Caco-2 (cell line): ENCODE measurements at regions of chr4 and their contacts with region 1.

Region 1: GRCh38 chr4:25180524-25181131 is 20.4 kb upstream of the SEPSECS start:
- DNase-seq: peak; percentile 37 to 39
- H3K4me3 ChIP-seq: no peak overlapping the region
- H3K4me3 Mint-ChIP-seq: no peak overlapping the region
- H3K27ac Mint-ChIP-seq: no peak overlapping the region
- H3K4me1 ChIP-seq: peaks cover 11% of the 10 kb centered on the region; the same call in 1 of the 2 replicates
- H3K4me1 Mint-ChIP-seq: no peaks in the 10 kb centered on the region
- H3K27me3 ChIP-seq: no peaks in the 10 kb centered on the region
- H3K27me3 Mint-ChIP-seq: no peaks in the 10 kb centered on the region
- CTCF ChIP-seq: peak; percentile 56 to 61

Region 2: DNA sequence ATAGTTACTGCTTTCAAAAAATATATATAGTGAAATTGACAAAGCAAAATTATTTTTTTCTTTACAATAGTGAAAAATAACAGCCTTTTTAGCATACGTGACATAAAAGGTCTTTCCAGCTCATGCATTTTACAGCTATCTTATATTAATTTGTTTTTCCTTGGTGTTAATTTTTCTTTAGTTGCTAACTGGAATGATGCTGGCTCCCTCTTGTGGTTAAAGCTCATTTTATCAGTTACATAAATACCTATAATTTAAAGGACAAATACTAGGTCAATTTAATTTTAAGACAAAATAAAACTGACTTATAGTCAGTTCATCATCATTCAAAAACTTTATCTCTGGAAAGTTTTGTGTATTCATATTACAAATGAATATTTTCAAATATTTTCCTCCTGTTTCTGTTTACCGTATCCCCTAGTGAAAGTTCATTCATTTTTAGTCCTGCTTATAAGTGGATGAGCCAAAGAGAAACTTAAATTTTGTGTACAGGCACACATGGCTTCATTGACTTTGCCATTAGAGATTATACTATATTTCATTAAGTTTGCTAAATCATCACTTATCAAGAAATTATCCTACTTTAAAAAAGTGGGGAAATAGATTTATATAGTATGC is 186.5 kb after region 1 on chr4:
- CTCF ChIA-PET with region 1: interaction called, 3 read pairs
- POLR2A ChIA-PET with region 1: no interaction called
- intact Hi-C with region 1: loop called (anchors 1 kb)
- DNase-seq: peak in 1 of 2 experiments; percentile 24
- H3K4me3 ChIP-seq: no peak overlapping the region
- H3K4me3 Mint-ChIP-seq: no peak overlapping the region
- H3K27ac Mint-ChIP-seq: no peak overlapping the region
- H3K4me1 ChIP-seq: peaks cover 15% of the 10 kb centered on the region
- H3K4me1 Mint-ChIP-seq: no peaks in the 10 kb centered on the region
- H3K27me3 ChIP-seq: no peaks in the 10 kb centered on the region
- H3K27me3 Mint-ChIP-seq: no peaks in the 10 kb centered on the region
- CTCF ChIP-seq: peak; percentile 34 to 36